ENCODE measurements at regions of chr3 and their contacts with region 1.

Region 1: GRCh38 chr3:48989796-48990635 is at the start of gene P4HTM:
- DNase-seq: peak; percentile 35
- ATAC-seq: peak; percentile 84
- H3K4me3 ChIP-seq: peak within 1 kb of the TSS; percentile 93
- H3K27ac ChIP-seq: peak within 1 kb of the TSS; percentile 79
- H3K4me1 ChIP-seq: peaks cover 19% of the 10 kb centered on the region
- H3K27me3 ChIP-seq: no peaks in the 10 kb centered on the region
- CTCF ChIP-seq: peak in 2 of 3 experiments; percentile 12 to 46; a peak in 3 of 6 replicates
- EP300 ChIP-seq: 0 out of 4 replicates have a peak, but pooled peaks of 1 of the 2 experiments have one; percentile 13
- POLR2A ChIP-seq: peak; percentile 71
- RAD21 ChIP-seq: peak; percentile 14; the same call in 1 of the 2 replicates
- polyA plus RNA-seq, gene P4HTM: 0.76 to 6.5 TPM

Region 2: GRCh38 chr3:49007068-49007770 is 17.2 kb after region 1 on chr3 and contains the start of gene WDR6:
- CTCF ChIA-PET with region 1: interaction called, 123 read pairs
- POLR2A ChIA-PET with region 1: interaction called, 67 read pairs
- RAD21 ChIA-PET with region 1: interaction called, 44 read pairs
- SMC1A ChIA-PET with region 1: interaction called, 57 read pairs
- in situ Hi-C with region 1: no loop called
- intact Hi-C with region 1: loop called (anchors 2 kb)
- DNase-seq: peak; percentile 96
- ATAC-seq: peak; percentile 94
- H3K4me3 ChIP-seq: peak within 1 kb of the TSS; percentile 83
- H3K27ac ChIP-seq: peak within 1 kb of the TSS; percentile 89
- H3K4me1 ChIP-seq: peaks cover 16% of the 10 kb centered on the region
- H3K27me3 ChIP-seq: no peaks in the 10 kb centered on the region
- CTCF ChIP-seq: peak; percentile 41 to 48 (median 47); a peak in 5 of 6 replicates
- EP300 ChIP-seq: peak in 1 of 2 experiments; percentile 35; a peak in 1 of 4 replicates
- POLR2A ChIP-seq: peak; percentile 99
- RAD21 ChIP-seq: no peak
- polyA plus RNA-seq, gene WDR6: 21.3 to 24.1 TPM

Region 3: DNA sequence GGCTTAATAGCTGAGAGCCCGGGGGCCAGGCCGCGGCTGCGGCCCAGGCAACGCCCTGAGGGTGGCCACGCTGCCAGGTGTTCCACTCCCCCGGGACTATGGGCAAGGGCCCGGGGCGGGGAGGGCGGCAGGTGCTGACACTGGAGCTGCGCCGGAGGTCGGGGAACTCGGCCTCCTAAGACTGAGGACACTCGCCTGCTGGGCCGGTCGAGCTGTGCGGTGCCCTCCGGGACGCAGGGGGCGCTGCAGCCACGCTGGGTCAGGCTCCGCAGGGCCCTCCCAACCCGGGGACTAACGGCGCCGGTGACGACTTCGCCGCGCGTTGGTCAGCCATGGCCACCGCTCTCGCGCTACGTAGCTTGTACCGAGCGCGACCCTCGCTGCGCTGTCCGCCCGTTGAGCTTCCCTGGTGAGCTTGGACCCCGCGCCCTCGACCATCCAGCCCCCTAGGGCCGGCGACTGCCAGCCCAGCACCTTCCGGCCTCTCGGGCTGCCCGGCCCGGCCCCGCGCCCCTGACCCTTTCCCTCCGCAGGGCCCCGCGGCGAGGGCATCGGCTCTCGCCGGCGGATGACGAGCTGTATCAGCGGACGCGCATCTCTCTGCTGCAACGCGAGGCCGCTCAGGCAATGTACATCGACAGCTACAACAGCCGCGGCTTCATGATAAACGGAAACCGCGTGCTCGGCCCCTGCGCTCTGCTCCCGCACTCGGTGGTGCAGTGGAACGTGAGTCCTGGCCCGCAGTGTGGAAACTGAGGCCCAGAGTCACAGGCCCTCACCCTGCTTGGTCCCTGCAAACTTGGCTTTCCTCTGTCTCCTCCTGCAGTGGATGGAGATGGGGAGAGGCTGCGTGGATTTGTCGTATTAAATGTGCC is 32.0 kb after region 1 on chr3 and contains the start of gene NDUFAF3:
- CTCF ChIA-PET with region 1: interaction called, 41 read pairs
- POLR2A ChIA-PET with region 1: interaction called, 20 read pairs
- RAD21 ChIA-PET with region 1: interaction called, 12 read pairs
- SMC1A ChIA-PET with region 1: interaction called, 31 read pairs
- in situ Hi-C with region 1: no loop called
- intact Hi-C with region 1: loop called (anchors 2 kb)
- DNase-seq: peak; percentile 74
- ATAC-seq: peak; percentile 81
- H3K4me3 ChIP-seq: peak within 1 kb of the TSS; percentile 95
- H3K27ac ChIP-seq: peak within 1 kb of the TSS; percentile 94
- H3K4me1 ChIP-seq: peaks cover 21% of the 10 kb centered on the region
- H3K27me3 ChIP-seq: no peaks in the 10 kb centered on the region
- CTCF ChIP-seq: peak; percentile 95 to 97 (median 95)
- EP300 ChIP-seq: peak in 1 of 2 experiments; percentile 25; a peak in 1 of 4 replicates
- POLR2A ChIP-seq: no peak
- RAD21 ChIP-seq: 0 out of 2 replicates have a peak, but pooled peaks have one; percentile 14
- polyA plus RNA-seq, gene NDUFAF3: 31.3 to 40.2 TPM

Region 4: DNA sequence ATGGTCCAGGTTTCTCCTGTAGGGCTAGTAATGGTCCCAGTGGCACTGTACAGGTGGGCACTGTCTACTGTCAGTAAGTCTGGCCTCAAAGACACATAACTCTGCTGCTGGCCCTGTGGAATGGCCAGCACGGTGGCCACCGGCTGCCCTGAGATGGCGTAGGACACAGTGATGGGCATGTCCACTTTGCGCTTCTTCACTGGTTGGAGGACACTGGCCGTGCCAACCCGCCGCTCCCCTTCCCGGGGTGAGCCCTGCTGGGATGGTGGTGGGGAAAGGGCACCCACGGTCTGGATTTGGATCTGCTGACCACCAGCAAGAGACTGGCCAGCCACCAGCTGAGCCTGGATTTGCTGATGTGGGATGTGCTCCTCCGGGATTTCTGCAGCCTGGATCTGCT is 67.3 kb after region 1 on chr3:
- CTCF ChIA-PET with region 1: interaction called, 3 read pairs
- POLR2A ChIA-PET with region 1: interaction called, 10 read pairs
- RAD21 ChIA-PET with region 1: interaction called, 4 read pairs
- SMC1A ChIA-PET with region 1: no interaction called
- in situ Hi-C with region 1: no loop called
- intact Hi-C with region 1: no loop called
- DNase-seq: no peak
- ATAC-seq: no peak
- H3K4me3 ChIP-seq: no peak overlapping the region
- H3K27ac ChIP-seq: no peak overlapping the region
- H3K4me1 ChIP-seq: no peaks in the 10 kb centered on the region
- H3K27me3 ChIP-seq: no peaks in the 10 kb centered on the region
- CTCF ChIP-seq: no peak
- EP300 ChIP-seq: no peak
- POLR2A ChIP-seq: peak; percentile 52
- RAD21 ChIP-seq: no peak

Region 5: GRCh38 chr3:49120438-49121131 is 130.6 kb after region 1 on chr3 and contains the start of gene USP19:
- CTCF ChIA-PET with region 1: interaction called, 13 read pairs
- POLR2A ChIA-PET with region 1: interaction called, 13 read pairs
- RAD21 ChIA-PET with region 1: interaction called, 7 read pairs
- SMC1A ChIA-PET with region 1: interaction called, 4 read pairs
- in situ Hi-C with region 1: no loop called
- intact Hi-C with region 1: no loop called
- DNase-seq: peak; percentile 71
- ATAC-seq: peak; percentile 94
- H3K4me3 ChIP-seq: peak within 1 kb of the TSS; percentile 100
- H3K27ac ChIP-seq: peak within 1 kb of the TSS; percentile 79
- H3K4me1 ChIP-seq: peaks cover 10% of the 10 kb centered on the region
- H3K27me3 ChIP-seq: no peaks in the 10 kb centered on the region
- CTCF ChIP-seq: no peak
- EP300 ChIP-seq: no peak
- POLR2A ChIP-seq: peak; percentile 97
- RAD21 ChIP-seq: no peak
- polyA plus RNA-seq, gene USP19: 0.24 to 0.68 TPM

Region 6: DNA sequence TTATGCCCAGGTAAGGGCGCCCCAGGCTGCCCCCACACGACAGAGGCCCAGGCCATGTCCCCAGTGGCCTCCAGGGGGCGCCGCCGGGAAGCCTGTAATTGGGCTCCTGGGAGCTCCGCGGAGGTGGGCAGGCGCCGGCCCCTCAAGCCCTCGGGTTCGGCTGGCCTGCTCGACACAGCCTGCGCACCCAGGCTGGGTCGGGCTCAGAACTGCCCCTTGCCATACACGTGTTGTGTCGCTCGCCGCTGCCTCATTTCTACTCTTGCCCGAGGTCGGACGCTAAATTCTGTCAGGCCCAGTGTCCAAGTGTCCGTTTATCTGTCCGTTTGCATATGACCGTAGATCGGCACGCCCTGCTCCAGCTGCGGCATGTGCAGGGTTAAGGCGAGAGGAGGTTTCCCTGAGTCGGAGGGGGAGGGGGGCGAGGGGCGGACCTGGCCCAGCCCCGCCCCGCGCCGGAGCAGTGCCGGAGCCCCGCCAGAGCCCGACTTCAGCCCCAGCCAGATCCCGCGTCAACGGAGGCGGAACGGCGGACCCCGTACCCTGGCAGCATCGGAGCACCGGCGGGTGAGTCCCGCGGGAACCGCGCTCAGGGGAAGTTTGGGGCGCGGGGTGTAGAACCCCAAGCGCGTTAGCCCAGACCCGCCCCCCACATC is 181.2 kb after region 1 on chr3 and contains the start of gene KLHDC8B:
- CTCF ChIA-PET with region 1: interaction called, 12 read pairs
- POLR2A ChIA-PET with region 1: no interaction called
- RAD21 ChIA-PET with region 1: interaction called, 4 read pairs
- SMC1A ChIA-PET with region 1: no interaction called
- in situ Hi-C with region 1: no loop called
- intact Hi-C with region 1: no loop called
- DNase-seq: peak; percentile 12
- ATAC-seq: peak; percentile 90
- H3K4me3 ChIP-seq: peak within 1 kb of the TSS; percentile 74
- H3K27ac ChIP-seq: no peak within 1 kb of the TSS
- H3K4me1 ChIP-seq: peaks cover 5% of the 10 kb centered on the region
- H3K27me3 ChIP-seq: no peaks in the 10 kb centered on the region
- CTCF ChIP-seq: peak; percentile 93 to 96 (median 96)
- EP300 ChIP-seq: no peak
- POLR2A ChIP-seq: peak; percentile 53
- RAD21 ChIP-seq: peak; percentile 69
- polyA plus RNA-seq, gene KLHDC8B: 0.40 TPM in 1 of 2 experiments, not detected in the other

Region 7: GRCh38 chr3:49411535-49411967 is 421.5 kb after region 1 on chr3:
- CTCF ChIA-PET with region 1: no interaction called
- POLR2A ChIA-PET with region 1: no interaction called
- RAD21 ChIA-PET with region 1: no interaction called
- SMC1A ChIA-PET with region 1: no interaction called
- in situ Hi-C with region 1: no loop called
- intact Hi-C with region 1: no loop called
- DNase-seq: no peak
- ATAC-seq: peak; percentile 28
- H3K4me3 ChIP-seq: peak overlapping the region; percentile 93
- H3K27ac ChIP-seq: peak overlapping the region; percentile 96
- H3K4me1 ChIP-seq: peaks cover 26% of the 10 kb centered on the region
- H3K27me3 ChIP-seq: no peaks in the 10 kb centered on the region
- CTCF ChIP-seq: no peak
- EP300 ChIP-seq: no peak
- POLR2A ChIP-seq: no peak
- RAD21 ChIP-seq: no peak

Measured in GM12878 (cell line).